Vagina (tissue), 2 donors: ENCODE measurements at regions of chr5 and their contacts with region 1.

Region 1: GRCh38 chr5:133869519-133870335 is 98.7 kb downstream of the C5orf15 start:
- DNase-seq: no peak
- H3K4me3 ChIP-seq: no peak overlapping the region
- H3K27ac ChIP-seq: no peak overlapping the region
- H3K4me1 ChIP-seq: no peaks in the 10 kb centered on the region
- H3K27me3 ChIP-seq: no peaks in the 10 kb centered on the region
- CTCF ChIP-seq: no peak
- POLR2A ChIP-seq: no peak

Region 2: GRCh38 chr5:133111299-133111698 is 758.4 kb before region 1 on chr5:
- intact Hi-C with region 1: loop called (anchors 10 kb)
- DNase-seq: no peak
- H3K4me3 ChIP-seq: no peak overlapping the region
- H3K27ac ChIP-seq: no peak overlapping the region
- H3K4me1 ChIP-seq: no peaks in the 10 kb centered on the region
- H3K27me3 ChIP-seq: no peaks in the 10 kb centered on the region
- CTCF ChIP-seq: peak; percentile 80 to 89 (median 83)
- POLR2A ChIP-seq: no peak

Region 3: DNA sequence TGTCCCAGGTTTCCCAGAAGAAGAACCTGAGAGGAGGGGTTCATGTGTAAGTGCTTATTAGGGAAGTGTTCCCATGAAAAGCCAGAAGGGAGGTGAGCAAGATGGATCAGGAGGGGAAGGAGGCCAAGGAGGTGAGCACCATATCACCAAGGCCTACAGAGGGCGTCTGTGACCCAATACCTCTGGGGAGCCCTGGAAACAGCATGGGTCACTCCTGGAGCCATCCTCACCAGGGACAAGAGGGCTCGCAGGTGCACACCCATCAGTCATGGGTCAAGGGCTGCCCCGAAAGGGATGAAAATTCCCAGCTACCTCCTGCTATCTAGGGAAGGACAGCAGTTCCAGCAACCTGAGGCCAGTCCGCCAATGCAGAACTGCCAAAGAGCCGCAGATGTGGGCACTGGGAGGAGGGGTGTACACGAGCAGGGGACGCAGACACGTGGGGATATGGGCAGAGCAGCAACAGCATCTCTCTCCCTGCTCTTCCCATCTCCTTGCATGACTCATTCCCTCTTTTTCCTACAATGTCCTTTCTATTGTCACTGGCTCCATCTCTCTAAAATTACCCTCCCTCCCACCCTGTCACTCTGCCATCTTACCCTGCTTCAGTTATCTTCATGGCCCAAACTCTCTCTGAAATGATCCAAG is 89.8 kb before region 1 on chr5:
- intact Hi-C with region 1: no loop called
- DNase-seq: no peak
- H3K4me3 ChIP-seq: no peak overlapping the region
- H3K27ac ChIP-seq: no peak overlapping the region
- H3K4me1 ChIP-seq: no peaks in the 10 kb centered on the region
- H3K27me3 ChIP-seq: no peaks in the 10 kb centered on the region
- CTCF ChIP-seq: no peak
- POLR2A ChIP-seq: no peak

Region 4: DNA sequence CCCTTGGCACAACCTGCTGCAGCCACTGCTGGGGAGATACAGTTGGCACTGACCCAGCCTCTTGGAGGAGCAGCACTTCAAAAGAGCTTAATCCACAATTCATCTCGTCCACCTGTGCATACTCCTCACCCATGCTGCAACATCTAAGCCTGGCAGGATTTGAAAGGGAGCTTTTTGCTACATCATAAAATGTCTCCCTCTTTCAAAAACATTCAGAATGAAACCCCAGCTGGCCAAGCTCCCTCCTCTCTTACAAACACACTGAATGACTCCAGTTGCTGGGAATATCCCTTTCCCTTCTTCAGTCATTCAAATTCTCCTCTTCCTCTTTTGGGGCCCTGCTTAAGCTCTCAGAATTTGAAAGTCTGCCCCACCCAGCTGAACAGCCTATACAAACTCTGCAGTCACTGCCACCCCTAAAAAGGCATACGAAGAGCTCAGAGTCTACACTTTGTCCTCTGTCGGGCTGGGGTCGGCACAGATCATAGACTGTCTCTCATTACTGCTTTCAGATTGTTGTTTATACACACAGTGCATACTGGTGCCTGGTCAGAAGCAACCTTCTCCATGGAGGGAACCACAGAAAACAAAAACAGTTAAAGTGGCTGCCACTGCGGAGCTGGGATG is 107.5 kb after region 1 on chr5:
- intact Hi-C with region 1: no loop called
- DNase-seq: no peak
- H3K4me3 ChIP-seq: no peak overlapping the region
- H3K27ac ChIP-seq: no peak overlapping the region
- H3K4me1 ChIP-seq: no peaks in the 10 kb centered on the region
- H3K27me3 ChIP-seq: no peaks in the 10 kb centered on the region
- CTCF ChIP-seq: no peak
- POLR2A ChIP-seq: no peak